Left ventricle myocardium superior (tissue), 1 donor: ENCODE measurements at regions of chr10 and their contacts with region 1.

Region 1: DNA sequence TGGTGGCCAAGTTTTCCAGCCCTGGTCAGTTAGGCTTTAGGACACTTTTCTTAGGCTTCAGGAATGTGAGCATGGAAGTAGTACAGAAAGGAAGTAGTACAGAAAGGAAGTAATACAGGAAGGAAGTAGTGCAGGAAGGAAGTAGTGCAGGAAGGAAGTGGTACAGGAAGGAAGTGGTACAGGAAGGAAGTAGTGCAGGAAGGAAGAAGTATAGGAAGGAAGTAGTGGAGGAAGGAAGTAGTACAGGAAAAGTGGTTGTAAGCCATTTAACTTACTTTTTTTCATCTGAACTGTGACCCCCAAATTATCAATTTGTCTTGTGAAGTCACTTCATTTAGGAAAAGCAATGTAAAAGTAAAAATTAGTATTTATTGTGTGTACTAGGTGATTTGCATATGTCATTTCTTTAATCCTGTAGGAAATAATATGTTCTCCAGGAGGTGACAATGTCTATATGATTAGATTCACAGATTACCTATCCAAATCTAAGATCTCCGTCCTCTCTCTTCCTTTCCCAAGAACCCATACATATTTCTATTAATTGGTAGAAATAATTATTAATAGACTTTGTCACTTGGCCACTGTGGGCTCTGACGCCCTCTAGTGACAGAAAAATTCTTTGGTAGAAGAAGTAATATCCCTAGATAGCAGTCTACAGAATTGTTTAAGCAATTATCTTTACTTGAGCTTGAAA is 3.9 kb upstream of the FAS start:
- DNase-seq: no peak
- ATAC-seq: no peak

Region 2: GRCh38 chr10:88920986-88921593 is 65.6 kb before region 1 on chr10:
- intact Hi-C with region 1: no loop called
- DNase-seq: no peak
- ATAC-seq: no peak

Region 3: GRCh38 chr10:88932539-88933256 is 54.0 kb before region 1 on chr10:
- intact Hi-C with region 1: loop called (anchors 2 kb)
- DNase-seq: no peak
- ATAC-seq: peak; percentile 75

Region 4: DNA sequence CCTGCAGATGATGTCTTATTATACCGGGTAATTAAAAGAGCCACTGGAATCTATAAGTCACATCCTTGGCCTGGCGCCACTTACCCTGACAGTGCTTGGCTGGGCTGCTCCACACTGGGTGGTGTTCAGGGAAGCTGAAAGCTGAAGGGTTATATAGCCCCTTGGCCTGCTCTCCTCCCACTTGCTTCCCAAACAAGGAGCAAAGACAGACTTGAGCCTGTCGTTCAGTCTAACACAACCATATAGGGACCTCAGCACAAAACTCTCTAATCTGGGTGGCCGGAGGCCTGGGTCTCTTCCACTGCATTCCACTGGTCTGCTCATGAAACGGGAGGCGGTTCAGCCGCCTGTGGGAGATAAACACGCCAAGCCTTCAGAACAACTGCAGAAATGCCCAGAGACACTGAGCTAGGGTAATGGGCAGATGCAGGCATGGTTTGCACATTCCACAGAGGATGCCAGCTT is 34.0 kb before region 1 on chr10 and contains the start of gene ACTA2:
- intact Hi-C with region 1: no loop called
- DNase-seq: peak; percentile 46
- ATAC-seq: peak; percentile 37
- total RNA-seq, gene ACTA2: 53.5 TPM

Region 5: DNA sequence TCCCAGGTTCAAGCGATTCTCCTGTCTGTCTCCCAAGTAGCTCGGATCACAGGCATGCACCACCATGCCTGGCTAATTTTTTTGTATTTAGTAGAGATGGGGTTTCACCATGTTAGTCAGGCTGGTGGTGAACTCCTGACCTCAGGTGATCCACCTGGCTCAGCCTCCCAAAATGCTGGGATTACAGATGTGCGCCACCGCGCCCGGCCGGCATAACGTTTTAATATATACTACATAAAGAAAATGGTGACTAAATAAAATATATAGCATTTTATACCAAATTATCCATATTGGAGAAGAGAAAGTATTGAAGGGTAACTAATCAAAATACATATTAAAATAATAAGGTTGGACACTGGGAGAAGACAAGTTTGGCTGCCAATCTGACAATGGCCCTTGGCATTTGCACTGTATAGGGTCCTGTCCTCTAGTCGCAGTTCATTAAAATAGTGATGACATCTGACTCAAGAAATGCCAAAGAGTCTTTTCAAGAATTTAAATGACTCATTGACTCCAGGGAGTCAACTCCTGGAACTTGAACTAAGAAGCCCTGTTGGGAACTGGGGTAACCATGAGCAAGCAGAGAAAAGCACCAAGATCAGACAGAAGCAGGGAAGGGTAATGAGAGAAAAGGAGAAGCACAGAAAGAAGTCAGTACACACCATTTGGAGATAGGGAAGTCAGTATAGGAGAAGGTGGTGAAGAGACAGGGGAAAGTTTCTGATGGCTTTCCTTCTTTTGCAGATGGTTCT is 129.4 kb after region 1 on chr10:
- intact Hi-C with region 1: no loop called
- DNase-seq: no peak
- ATAC-seq: no peak